T-cell (primary cell): ENCODE measurements at regions of chr14 and their contacts with region 1.

Region 1: DNA sequence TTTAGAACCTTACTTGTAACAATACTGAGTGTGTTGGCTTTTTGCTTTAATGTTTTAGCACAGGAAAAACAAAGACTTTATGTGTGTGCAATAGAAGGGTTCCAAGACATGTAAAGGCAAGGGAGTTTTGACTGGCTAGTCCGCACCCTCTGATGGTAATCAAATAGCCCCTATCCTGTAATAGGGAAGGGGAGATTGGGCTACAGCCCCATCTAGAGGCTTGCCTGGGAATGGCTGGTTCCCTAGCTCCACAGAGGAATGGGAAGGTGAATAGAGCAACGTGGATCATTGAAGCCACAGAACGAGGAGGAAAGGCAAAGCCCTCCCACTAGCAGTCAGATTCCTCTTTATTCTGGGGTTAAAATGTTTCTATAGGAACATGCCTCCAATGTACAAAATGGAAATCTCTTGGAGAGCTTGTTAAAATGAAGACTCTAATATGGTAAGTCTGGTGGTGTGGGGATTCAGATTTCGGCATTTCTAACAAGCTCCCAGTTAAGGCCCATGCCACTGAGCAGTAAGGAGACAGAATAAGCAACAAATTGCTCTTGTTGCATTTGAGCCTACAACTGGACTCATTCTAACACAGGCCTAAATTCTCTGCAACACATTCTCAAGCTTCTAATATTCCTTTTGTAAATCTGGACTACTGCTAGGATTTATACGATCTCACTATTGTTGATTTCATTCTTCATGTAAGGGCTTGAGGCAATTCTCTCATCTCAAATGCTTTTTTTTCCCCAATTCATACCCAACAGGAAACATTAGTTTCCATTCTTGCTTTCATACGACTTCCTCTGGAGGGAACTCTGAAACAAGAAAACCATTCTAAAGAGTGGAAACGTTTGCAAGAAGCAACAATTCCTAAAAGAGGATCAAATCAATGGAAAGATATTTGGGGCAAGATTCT is 57.1 kb downstream of the NIN start:
- DNase-seq: peak in 10 of 35 experiments; percentile 5 to 49 (median 18)
- ATAC-seq: peak in 2 of 4 experiments; percentile 35 to 63
- H3K4me3 ChIP-seq: no peak overlapping the region
- H3K4me3 Mint-ChIP-seq: no peak overlapping the region
- H3K27ac ChIP-seq: no peak overlapping the region
- H3K27ac Mint-ChIP-seq: peak overlapping the region; percentile 11 to 80
- H3K4me1 ChIP-seq: peaks cover 2 to 15% of the 10 kb centered on the region in 2 experiments
- H3K4me1 Mint-ChIP-seq: peaks cover 21 to 27% (median 24%) of the 10 kb centered on the region in 3 donors
- H3K27me3 ChIP-seq: no peaks in the 10 kb centered on the region
- H3K27me3 Mint-ChIP-seq: no peaks in the 10 kb centered on the region

Region 2: GRCh38 chr14:50762001-50762930 is 11.6 kb before region 1 on chr14:
- CTCF ChIA-PET with region 1: interaction called, 9 to 27 read pairs
- POLR2A ChIA-PET with region 1: interaction called, 3 to 5 read pairs
- DNase-seq: no peak
- ATAC-seq: no peak
- H3K4me3 ChIP-seq: no peak overlapping the region
- H3K4me3 Mint-ChIP-seq: no peak overlapping the region
- H3K27ac ChIP-seq: no peak overlapping the region
- H3K27ac Mint-ChIP-seq: peak overlapping the region; percentile 16 to 58
- H3K4me1 ChIP-seq: no peaks in the 10 kb centered on the region
- H3K4me1 Mint-ChIP-seq: peaks cover 0 to 4% (median 0%) of the 10 kb centered on the region in 3 donors
- H3K27me3 ChIP-seq: no peaks in the 10 kb centered on the region
- H3K27me3 Mint-ChIP-seq: no peaks in the 10 kb centered on the region

Region 3: GRCh38 chr14:50785457-50786063 is 11.7 kb after region 1 on chr14:
- CTCF ChIA-PET with region 1: interaction called, 15 to 20 read pairs
- POLR2A ChIA-PET with region 1: interaction called, 3 read pairs
- DNase-seq: peak in 2 of 35 experiments; percentile 17 to 48
- ATAC-seq: peak; percentile 64 to 83 (median 76)
- H3K4me3 ChIP-seq: peak overlapping the region in 1 of 2 donors; percentile 50
- H3K4me3 Mint-ChIP-seq: peak overlapping the region; percentile 13 to 70 (median 51)
- H3K27ac ChIP-seq: peak overlapping the region; percentile 78
- H3K27ac Mint-ChIP-seq: peak overlapping the region; percentile 97 to 98
- H3K4me1 ChIP-seq: peaks cover 59 to 61% of the 10 kb centered on the region in 2 experiments
- H3K4me1 Mint-ChIP-seq: peaks cover 87 to 92% (median 87%) of the 10 kb centered on the region in 3 donors
- H3K27me3 ChIP-seq: no peaks in the 10 kb centered on the region
- H3K27me3 Mint-ChIP-seq: no peaks in the 10 kb centered on the region